ENCODE measurements at regions of chr1 and their contacts with region 1.

Region 1: GRCh38 chr1:104259481-104259880 is 509.8 kb downstream of the AMY1C start:
- DNase-seq: no peak
- H3K4me3 ChIP-seq: no peak overlapping the region
- H3K27ac ChIP-seq: no peak overlapping the region
- H3K4me1 ChIP-seq: no peaks in the 10 kb centered on the region
- H3K27me3 ChIP-seq: no peaks in the 10 kb centered on the region
- CTCF ChIP-seq: no peak
- POLR2A ChIP-seq: no peak

Region 2: GRCh38 chr1:103561643-103562395 is 697.7 kb before region 1 on chr1:
- intact Hi-C with region 1: no loop called
- DNase-seq: no peak
- H3K4me3 ChIP-seq: peak overlapping the region in 1 of 4 donors; percentile 33
- H3K27ac ChIP-seq: peak overlapping the region in 4 of 5 donors; percentile 37 to 68 (median 55)
- H3K4me1 ChIP-seq: peaks cover 11 to 17% of the 10 kb centered on the region in 2 donors
- H3K27me3 ChIP-seq: no peaks in the 10 kb centered on the region
- CTCF ChIP-seq: no peak
- POLR2A ChIP-seq: no peak

Region 3: DNA sequence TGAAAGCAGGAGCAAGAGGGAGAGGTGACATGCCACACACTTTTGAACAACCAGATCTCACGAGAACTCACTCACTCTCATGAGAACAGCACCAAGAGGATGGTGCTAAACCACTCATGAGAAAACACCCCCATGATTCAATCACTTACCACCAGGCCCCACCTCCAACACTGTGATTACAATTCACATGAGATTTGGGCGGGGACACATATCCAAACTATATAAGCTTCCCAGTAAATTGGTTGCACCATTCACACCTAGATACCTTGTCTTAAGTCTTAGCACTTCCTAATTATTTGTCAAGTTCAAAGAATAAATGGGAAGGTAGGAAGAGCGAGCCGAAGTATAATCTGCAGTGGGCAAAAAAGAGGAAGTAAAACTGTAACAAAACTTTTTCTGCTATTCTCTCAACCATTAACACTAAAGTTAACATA is 475.5 kb before region 1 on chr1:
- intact Hi-C with region 1: no loop called
- DNase-seq: no peak
- H3K4me3 ChIP-seq: no peak overlapping the region
- H3K27ac ChIP-seq: no peak overlapping the region
- H3K4me1 ChIP-seq: no peaks in the 10 kb centered on the region
- H3K27me3 ChIP-seq: no peaks in the 10 kb centered on the region
- CTCF ChIP-seq: no peak
- POLR2A ChIP-seq: no peak

Region 4: GRCh38 chr1:103931891-103932290 is 327.6 kb before region 1 on chr1:
- intact Hi-C with region 1: no loop called
- DNase-seq: no peak
- H3K4me3 ChIP-seq: no peak overlapping the region
- H3K27ac ChIP-seq: no peak overlapping the region
- H3K4me1 ChIP-seq: no peaks in the 10 kb centered on the region
- H3K27me3 ChIP-seq: no peaks in the 10 kb centered on the region
- CTCF ChIP-seq: no peak
- POLR2A ChIP-seq: no peak

Region 5: GRCh38 chr1:104238991-104239390 is 20.5 kb before region 1 on chr1:
- intact Hi-C with region 1: loop called in 1 of 2 experiments (anchors 2 kb)
- DNase-seq: no peak
- H3K4me3 ChIP-seq: no peak overlapping the region
- H3K27ac ChIP-seq: no peak overlapping the region
- H3K4me1 ChIP-seq: no peaks in the 10 kb centered on the region
- H3K27me3 ChIP-seq: no peaks in the 10 kb centered on the region
- CTCF ChIP-seq: no peak
- POLR2A ChIP-seq: no peak

Region 6: GRCh38 chr1:104358621-104359020 is 99.1 kb after region 1 on chr1:
- intact Hi-C with region 1: no loop called
- DNase-seq: no peak
- H3K4me3 ChIP-seq: no peak overlapping the region
- H3K27ac ChIP-seq: no peak overlapping the region
- H3K4me1 ChIP-seq: no peaks in the 10 kb centered on the region
- H3K27me3 ChIP-seq: no peaks in the 10 kb centered on the region
- CTCF ChIP-seq: no peak
- POLR2A ChIP-seq: no peak